Activated B cell treated with CpG ODN at 0.5 μM for 24 hours (primary cell): ENCODE measurements at regions of chr4 and their contacts with region 1.

Region 1: DNA sequence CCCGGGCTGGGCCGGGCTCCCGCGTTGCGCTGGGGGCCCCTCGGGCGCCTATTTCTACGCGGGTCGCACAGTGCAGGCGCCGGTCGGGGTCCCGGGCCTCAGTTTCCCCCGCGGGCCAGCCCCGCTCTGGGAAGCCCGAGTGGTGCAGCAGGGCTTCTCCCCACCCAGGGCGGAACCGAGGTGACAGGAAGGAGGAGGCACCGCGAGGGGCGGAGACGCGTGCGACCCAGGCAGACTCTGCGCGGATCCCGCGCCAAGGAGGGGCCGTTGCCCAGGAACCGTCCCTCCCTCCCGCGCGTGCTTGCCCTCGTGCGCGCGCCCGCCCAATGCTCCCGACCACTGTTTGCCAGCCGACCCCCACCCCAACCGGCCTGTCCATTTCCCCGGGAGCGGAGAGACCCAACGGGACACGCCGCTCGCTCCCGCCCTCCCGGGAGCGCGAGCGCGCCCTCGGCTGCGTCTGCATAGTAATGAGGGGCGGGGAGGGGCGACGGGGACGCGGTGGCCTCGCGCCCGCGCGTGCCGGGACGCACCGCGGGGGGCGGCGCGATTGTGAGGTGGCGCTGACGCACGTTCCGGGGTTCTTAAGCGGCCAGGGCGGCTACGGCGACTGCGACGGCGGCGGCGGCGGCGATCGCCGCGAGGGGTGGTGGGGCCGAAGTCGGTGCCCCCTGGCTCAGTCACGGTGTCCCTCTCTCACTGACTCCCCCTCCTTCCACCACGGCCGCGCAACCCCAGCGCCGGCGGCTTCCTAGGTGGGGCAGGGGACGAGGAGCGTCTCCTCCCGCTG is at the start of gene CPEB2:
- DNase-seq: peak; percentile 92
- ATAC-seq: peak; percentile 69
- H3K4me3 Mint-ChIP-seq: peak within 1 kb of the TSS; percentile 93
- H3K27ac Mint-ChIP-seq: peak within 1 kb of the TSS; percentile 96
- H3K4me1 Mint-ChIP-seq: peaks cover 23% of the 10 kb centered on the region
- H3K27me3 Mint-ChIP-seq: no peaks in the 10 kb centered on the region
- CTCF ChIP-seq: no peak
- total RNA-seq, gene CPEB2: 6.9 and 7.2 TPM in 2 replicates

Region 2: DNA sequence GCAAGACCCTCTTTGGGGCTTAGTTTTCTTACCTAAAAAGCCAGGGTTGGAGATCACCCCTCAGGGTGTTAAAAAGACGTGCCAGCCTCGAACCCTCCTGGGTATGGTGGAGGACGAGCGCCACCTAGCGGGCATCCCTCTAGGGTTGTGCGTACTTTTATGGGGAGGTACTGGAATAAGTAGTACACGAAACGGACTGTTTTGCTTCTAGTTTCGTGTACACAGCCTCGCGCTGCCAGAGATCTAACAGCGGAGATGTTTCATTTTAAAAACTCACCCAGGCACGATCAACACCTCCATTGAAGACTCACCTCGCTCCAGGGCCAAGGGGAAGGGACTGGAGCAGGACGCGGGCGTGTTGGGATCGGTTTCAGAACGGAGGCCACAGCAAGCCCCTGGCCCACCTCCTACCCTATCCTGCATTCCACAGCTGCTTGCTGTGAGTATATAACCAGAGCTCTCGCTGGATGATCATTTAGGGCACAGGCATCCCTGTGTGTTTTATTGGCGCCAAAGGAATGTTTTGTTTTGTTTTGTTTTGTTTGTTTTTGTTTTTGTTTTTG is 1453.0 kb before region 1 on chr4:
- CTCF ChIA-PET with region 1: no interaction called
- POLR2A ChIA-PET with region 1: no interaction called
- intact Hi-C with region 1: loop called (anchors 1 kb)
- DNase-seq: peak; percentile 77
- ATAC-seq: peak; percentile 59
- H3K4me3 Mint-ChIP-seq: peak overlapping the region; percentile 62
- H3K27ac Mint-ChIP-seq: peak overlapping the region; percentile 9
- H3K4me1 Mint-ChIP-seq: peaks cover 30% of the 10 kb centered on the region
- H3K27me3 Mint-ChIP-seq: peaks cover 50% of the 10 kb centered on the region
- CTCF ChIP-seq: peak; percentile 86

Region 3: DNA sequence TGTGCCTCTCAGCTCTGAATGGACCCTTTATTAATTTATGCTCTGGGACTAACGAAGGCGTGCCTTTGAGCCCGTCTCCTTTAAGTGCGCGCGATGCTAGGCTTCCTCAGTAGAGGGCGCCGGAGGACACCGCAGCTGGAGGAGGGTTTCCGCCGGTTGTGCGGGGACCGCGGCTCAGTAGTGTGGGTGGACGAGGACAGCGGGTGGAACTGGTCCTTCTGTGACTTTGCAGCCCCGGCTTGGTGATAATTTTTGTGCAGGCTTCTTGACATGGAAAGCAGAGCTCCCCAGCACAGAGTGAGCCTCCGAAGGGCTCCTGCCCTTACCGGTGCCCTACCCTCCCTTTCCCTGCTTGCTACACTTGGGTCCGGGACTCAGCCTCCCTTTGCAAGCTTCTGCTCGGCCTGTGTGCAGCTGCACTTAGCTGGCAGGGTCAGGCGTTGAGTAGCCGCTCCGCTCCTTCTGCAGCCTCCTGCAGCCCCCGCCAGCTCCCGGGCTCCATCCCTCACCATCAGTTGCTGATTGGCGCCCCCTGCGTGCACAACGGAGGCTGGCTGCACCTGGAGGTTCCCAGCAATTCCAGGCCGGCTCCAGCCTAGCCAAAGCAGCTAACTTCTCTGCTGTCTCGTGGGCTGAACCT is 1347.8 kb before region 1 on chr4:
- CTCF ChIA-PET with region 1: no interaction called
- POLR2A ChIA-PET with region 1: no interaction called
- intact Hi-C with region 1: loop called (anchors 1 kb)
- DNase-seq: peak; percentile 71
- ATAC-seq: peak; percentile 93
- H3K4me3 Mint-ChIP-seq: peak overlapping the region; percentile 85
- H3K27ac Mint-ChIP-seq: no peak overlapping the region
- H3K4me1 Mint-ChIP-seq: peaks cover 13% of the 10 kb centered on the region
- H3K27me3 Mint-ChIP-seq: peaks cover 6% of the 10 kb centered on the region
- CTCF ChIP-seq: peak; percentile 43

Region 4: DNA sequence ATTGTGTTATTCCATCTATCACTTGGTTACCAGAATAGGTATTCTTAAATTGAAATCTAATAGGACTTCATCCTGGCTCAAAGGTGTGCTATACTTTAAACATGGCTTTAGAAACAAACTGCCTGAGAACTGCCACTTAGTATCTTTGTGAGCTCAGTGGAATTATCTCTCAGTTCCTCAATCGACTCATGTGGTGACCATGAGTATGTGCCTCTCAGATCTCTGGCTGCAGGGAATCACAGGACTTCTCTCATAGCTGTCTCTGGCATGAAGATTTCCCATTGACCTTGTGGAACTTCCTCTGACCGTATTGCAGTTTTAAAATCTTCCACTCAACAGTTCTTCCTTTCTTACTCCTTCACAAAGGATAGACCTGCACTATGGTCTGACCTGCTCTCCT is 692.6 kb before region 1 on chr4:
- CTCF ChIA-PET with region 1: no interaction called
- POLR2A ChIA-PET with region 1: interaction called, 8 read pairs
- intact Hi-C with region 1: loop called (anchors 10 kb)
- DNase-seq: no peak
- ATAC-seq: no peak
- H3K4me3 Mint-ChIP-seq: no peak overlapping the region
- H3K27ac Mint-ChIP-seq: no peak overlapping the region
- H3K4me1 Mint-ChIP-seq: peaks cover 27% of the 10 kb centered on the region
- H3K27me3 Mint-ChIP-seq: no peaks in the 10 kb centered on the region
- CTCF ChIP-seq: no peak

Region 5: DNA sequence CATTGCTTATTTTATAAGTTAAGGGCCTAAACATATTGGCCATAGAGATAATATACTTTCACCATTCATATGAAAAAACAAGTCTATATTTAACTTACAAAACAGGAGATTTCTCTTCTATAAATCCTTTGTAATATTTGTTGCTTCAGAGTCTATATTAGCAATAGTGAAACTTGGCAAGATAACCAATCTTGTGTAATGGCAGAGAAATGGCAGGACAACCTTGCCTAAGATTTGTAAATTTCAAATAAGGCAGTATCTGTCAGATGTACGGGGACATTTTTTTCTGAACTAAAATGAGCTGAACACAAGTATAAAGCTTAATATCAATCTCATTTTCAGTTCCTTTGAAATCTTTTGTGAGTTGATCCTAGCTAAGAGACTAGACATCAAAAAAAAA is 17.6 kb before region 1 on chr4:
- CTCF ChIA-PET with region 1: no interaction called
- POLR2A ChIA-PET with region 1: no interaction called
- intact Hi-C with region 1: no loop called
- DNase-seq: no peak
- ATAC-seq: no peak
- H3K4me3 Mint-ChIP-seq: no peak overlapping the region
- H3K27ac Mint-ChIP-seq: no peak overlapping the region
- H3K4me1 Mint-ChIP-seq: no peaks in the 10 kb centered on the region
- H3K27me3 Mint-ChIP-seq: peaks cover 12% of the 10 kb centered on the region
- CTCF ChIP-seq: no peak

Region 6: DNA sequence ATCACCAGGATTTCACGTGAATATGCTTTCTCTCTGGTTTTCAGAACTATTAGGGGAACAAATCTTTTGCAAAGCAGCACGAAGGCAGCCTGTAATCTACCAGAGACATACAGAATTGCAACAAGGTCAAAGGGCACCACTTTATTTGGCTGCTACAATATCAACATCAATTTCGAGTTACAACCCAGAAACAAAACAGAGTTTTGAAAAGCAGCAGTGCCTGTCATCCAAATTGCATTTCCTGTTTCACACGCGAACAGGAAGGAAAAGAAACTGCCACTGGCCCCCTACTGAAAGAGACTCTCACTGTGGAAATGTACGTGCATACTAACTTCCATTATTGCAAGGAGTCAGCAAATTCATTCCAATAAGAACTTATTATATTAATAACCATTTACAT is 408.7 kb after region 1 on chr4:
- CTCF ChIA-PET with region 1: no interaction called
- POLR2A ChIA-PET with region 1: no interaction called
- intact Hi-C with region 1: loop called (anchors 5 kb)
- DNase-seq: no peak
- ATAC-seq: peak; percentile 68
- H3K4me3 Mint-ChIP-seq: peak overlapping the region; percentile 73
- H3K27ac Mint-ChIP-seq: peak overlapping the region; percentile 79
- H3K4me1 Mint-ChIP-seq: peaks cover 67% of the 10 kb centered on the region
- H3K27me3 Mint-ChIP-seq: no peaks in the 10 kb centered on the region
- CTCF ChIP-seq: no peak

Region 7: DNA sequence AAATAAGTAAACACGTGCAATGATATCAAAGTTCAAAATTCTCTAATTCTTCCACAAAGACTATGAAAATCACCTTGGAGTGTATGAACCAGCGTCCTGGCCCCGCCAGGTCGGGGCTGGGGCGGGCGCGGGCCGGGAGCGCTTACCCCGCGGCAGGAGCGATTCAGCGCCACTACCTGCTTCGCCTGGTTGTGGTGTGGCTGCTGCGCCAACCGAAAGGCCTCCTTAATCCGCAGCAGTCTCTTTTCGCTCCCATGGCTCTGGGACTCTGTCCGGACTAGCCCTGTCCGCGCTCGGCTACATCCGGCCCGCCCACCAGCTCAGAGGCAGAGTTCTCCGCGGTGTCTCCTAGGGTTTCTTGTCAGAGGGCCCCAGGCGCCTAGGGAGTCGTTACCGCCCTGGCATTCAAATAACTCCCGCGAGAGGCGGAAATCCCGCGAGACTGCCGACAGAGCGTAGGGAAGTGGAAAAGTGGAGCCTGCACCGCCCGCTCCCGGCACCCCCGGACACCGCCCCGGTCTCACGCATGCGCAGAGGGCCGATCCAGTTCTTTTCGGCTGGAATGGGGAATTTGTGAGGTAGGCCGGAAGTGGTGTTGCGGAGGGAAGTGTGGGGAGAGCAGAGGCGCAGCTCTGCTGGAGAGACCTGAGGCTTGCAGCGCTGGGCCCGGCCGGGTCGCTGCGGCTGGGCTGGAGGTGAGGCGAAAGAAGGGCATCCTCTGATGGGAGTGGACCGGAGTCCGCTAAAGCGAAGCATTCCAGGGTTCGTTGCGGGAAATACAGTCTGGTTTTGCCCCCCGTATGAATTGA is 679.3 kb after region 1 on chr4 and contains the start of gene FAM200B:
- CTCF ChIA-PET with region 1: no interaction called
- POLR2A ChIA-PET with region 1: interaction called, 4 read pairs
- intact Hi-C with region 1: loop called (anchors 2 kb)
- DNase-seq: peak; percentile 98
- ATAC-seq: peak; percentile 98
- H3K4me3 Mint-ChIP-seq: peak within 1 kb of the TSS; percentile 97
- H3K27ac Mint-ChIP-seq: peak within 1 kb of the TSS; percentile 93
- H3K4me1 Mint-ChIP-seq: peaks cover 27% of the 10 kb centered on the region
- H3K27me3 Mint-ChIP-seq: no peaks in the 10 kb centered on the region
- CTCF ChIP-seq: no peak
- total RNA-seq, gene FAM200B: 9.1 and 11.3 TPM in 2 replicates

Region 8: DNA sequence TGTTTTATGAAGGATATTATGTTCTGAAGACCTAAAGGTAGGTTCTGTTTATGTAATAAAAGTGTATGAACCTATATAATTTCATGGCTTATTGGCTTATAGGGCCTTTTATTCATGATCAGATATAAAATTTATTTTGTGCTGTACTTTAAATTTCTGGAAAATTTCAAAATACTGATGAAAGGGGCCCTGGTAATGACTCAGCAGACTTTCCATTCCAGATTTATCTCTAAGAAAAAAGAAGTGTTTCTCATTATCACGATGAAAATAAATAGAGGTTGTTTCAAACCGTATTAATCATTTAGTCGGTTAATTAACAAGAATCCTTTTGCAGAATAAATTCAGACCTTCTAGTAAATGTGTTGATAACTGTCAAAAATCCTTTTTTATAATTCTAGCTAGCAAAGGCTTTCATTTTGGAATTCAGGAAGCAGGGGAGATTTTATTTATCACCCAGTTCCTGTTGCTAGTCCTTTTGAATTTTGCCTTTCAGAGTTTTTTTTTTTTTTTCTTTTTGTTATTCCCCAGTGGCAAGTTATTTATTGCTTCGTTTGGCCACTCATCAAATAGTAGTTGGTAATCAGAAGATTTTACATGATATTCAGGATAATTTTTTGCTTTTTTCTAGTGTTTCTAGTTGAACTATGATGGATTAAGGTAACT is 1229.6 kb after region 1 on chr4:
- CTCF ChIA-PET with region 1: no interaction called
- POLR2A ChIA-PET with region 1: no interaction called
- intact Hi-C with region 1: loop called (anchors 1 kb)
- DNase-seq: no peak
- ATAC-seq: no peak
- H3K4me3 Mint-ChIP-seq: peak overlapping the region; percentile 61
- H3K27ac Mint-ChIP-seq: peak overlapping the region; percentile 85
- H3K4me1 Mint-ChIP-seq: peaks cover 61% of the 10 kb centered on the region
- H3K27me3 Mint-ChIP-seq: no peaks in the 10 kb centered on the region
- CTCF ChIP-seq: no peak